Mucosa of descending colon (tissue), 3 donors: ENCODE measurements at regions of chr10 and their contacts with region 1.

Region 1: DNA sequence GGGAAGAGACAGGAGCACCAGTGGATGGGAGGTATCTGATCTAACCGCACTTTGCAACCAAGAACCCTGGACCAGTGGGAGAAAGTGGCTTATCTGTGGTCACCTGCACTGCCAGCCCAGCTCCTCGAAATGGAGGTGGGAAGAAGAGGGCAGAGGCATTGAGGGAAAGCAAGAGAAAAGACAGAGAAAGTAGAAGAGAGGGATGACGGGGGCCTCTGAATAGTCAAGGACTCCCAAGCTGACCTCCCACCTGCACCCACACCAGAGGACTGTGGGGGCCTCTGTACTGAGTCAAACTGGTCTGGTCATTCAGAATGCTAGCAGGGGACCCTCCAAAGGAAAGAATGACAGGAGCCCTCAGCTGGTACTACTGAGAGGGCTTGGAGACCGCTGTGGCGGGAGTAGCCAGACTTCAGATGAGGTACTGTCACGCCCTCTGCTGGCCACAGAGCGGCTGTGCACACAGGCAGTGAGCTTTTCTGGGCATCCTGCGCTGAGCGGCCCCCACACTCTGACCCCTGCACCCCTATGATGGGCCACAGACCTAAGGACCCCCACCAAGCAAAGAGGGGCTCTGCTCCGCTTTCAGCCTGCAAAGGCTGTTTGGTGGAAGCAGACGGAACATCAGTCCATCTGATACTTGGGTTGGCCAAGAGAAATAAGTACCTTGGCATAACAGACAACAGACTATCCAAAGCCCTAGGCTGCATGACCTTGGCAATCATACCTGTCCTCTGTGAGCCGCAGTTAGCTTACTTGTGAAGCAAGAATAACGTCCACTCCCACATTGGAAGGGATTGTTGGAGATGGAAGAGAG is 112.9 kb downstream of the COL13A1 start:
- DNase-seq: peak in 2 of 3 donors; percentile 79 to 81
- ATAC-seq: peak; percentile 83
- H3K4me3 ChIP-seq: no peak overlapping the region
- H3K4me1 ChIP-seq: peaks cover 37% of the 10 kb centered on the region
- CTCF ChIP-seq: peak; percentile 91

Region 2: GRCh38 chr10:69639291-69640195 is 275.1 kb before region 1 on chr10:
- intact Hi-C with region 1: loop called in 1 of 2 experiments (anchors 5 kb)
- DNase-seq: peak in 2 of 3 donors; percentile 59 to 82
- ATAC-seq: peak; percentile 61
- H3K4me3 ChIP-seq: no peak overlapping the region
- H3K4me1 ChIP-seq: no peaks in the 10 kb centered on the region
- CTCF ChIP-seq: peak; percentile 75

Region 3: GRCh38 chr10:69800109-69800508 is 114.5 kb before region 1 on chr10:
- intact Hi-C with region 1: loop called in 1 of 2 experiments (anchors 5 kb)
- DNase-seq: peak in 1 of 3 donors; percentile 71
- ATAC-seq: peak; percentile 68
- H3K4me3 ChIP-seq: no peak overlapping the region
- H3K4me1 ChIP-seq: peaks cover 18% of the 10 kb centered on the region
- CTCF ChIP-seq: peak; percentile 28

Region 4: GRCh38 chr10:69883310-69884023 is 31.1 kb before region 1 on chr10:
- intact Hi-C with region 1: loop called in 1 of 2 experiments (anchors 2 kb)
- DNase-seq: peak in 2 of 3 donors; percentile 7 to 56
- ATAC-seq: peak; percentile 94
- H3K4me3 ChIP-seq: no peak overlapping the region
- H3K4me1 ChIP-seq: peaks cover 17% of the 10 kb centered on the region
- CTCF ChIP-seq: peak; percentile 28

Region 5: DNA sequence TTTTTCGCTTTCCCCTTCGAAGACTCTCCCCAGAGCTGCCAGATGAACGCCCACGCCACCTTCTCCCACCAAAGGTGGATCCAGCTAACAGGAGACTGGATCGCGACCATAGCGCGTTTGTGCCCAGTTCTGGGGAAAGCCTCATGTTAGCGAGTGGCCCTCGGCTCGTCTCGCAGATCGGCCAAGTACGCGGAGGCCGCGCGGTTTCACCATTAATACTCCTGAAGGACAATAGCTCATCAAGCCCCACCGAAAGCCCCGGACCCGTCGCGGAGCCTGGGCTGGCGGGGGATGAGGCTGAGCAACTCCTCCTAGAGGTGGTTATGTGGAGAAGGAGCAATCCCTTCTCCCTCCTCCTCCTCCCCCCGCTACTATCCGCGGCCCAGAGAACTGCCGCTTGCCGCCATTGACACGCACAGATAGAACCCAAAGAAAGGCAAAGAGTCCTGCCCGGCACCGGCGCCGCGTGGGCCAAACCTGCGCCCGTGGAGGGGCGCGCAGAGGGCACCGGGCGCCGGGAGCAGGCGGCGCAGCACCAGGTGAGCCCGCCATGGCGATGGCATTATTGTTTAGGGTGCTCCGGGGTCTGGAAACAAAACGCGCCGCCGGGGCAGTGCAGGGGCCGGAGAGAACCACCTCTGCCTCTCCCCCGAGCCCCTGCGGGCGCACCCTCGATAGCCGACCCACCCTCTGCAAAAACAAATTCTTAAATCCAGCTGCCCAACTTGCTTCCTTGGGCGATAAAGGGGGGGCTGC is 138.0 kb after region 1 on chr10 and contains the start of gene MACROH2A2:
- intact Hi-C with region 1: no loop called
- DNase-seq: peak; percentile 54 to 72 (median 65)
- ATAC-seq: peak; percentile 89
- H3K4me3 ChIP-seq: peak within 1 kb of the TSS; percentile 37
- H3K4me1 ChIP-seq: peaks cover 7% of the 10 kb centered on the region
- CTCF ChIP-seq: no peak
- total RNA-seq, gene MACROH2A2: 7.3 to 13.6 (median 8.7) TPM